CD8-positive, alpha-beta memory T cell (primary cell): ENCODE measurements at regions of chr7 and their contacts with region 1.

Region 1: GRCh38 chr7:77759294-77759889 is 38.8 kb downstream of the TMEM60 start:
- DNase-seq: peak; percentile 47 to 70 (median 55)
- H3K4me3 ChIP-seq: no peak overlapping the region
- H3K4me3 Mint-ChIP-seq: peak overlapping the region in 1 of 7 donors; percentile 23
- H3K27ac ChIP-seq: no peak overlapping the region
- H3K27ac Mint-ChIP-seq: peak overlapping the region in 5 of 8 donors; percentile 4 to 82 (median 56)
- H3K4me1 ChIP-seq: peaks cover 7% of the 10 kb centered on the region
- H3K4me1 Mint-ChIP-seq: peaks cover 39 to 69% (median 64%) of the 10 kb centered on the region in 3 donors
- H3K27me3 ChIP-seq: no peaks in the 10 kb centered on the region
- H3K27me3 Mint-ChIP-seq: no peaks in the 10 kb centered on the region

Region 2: GRCh38 chr7:77651573-77652162 is 107.7 kb before region 1 on chr7:
- CTCF ChIA-PET with region 1: interaction called, 32 read pairs
- POLR2A ChIA-PET with region 1: no interaction called
- DNase-seq: peak in 3 of 5 donors; percentile 26 to 50 (median 30)
- H3K4me3 ChIP-seq: no peak overlapping the region
- H3K4me3 Mint-ChIP-seq: no peak overlapping the region
- H3K27ac ChIP-seq: no peak overlapping the region
- H3K27ac Mint-ChIP-seq: no peak overlapping the region
- H3K4me1 ChIP-seq: no peaks in the 10 kb centered on the region
- H3K4me1 Mint-ChIP-seq: peaks cover 0 to 3% (median 0%) of the 10 kb centered on the region in 3 donors
- H3K27me3 ChIP-seq: no peaks in the 10 kb centered on the region
- H3K27me3 Mint-ChIP-seq: no peaks in the 10 kb centered on the region

Region 3: DNA sequence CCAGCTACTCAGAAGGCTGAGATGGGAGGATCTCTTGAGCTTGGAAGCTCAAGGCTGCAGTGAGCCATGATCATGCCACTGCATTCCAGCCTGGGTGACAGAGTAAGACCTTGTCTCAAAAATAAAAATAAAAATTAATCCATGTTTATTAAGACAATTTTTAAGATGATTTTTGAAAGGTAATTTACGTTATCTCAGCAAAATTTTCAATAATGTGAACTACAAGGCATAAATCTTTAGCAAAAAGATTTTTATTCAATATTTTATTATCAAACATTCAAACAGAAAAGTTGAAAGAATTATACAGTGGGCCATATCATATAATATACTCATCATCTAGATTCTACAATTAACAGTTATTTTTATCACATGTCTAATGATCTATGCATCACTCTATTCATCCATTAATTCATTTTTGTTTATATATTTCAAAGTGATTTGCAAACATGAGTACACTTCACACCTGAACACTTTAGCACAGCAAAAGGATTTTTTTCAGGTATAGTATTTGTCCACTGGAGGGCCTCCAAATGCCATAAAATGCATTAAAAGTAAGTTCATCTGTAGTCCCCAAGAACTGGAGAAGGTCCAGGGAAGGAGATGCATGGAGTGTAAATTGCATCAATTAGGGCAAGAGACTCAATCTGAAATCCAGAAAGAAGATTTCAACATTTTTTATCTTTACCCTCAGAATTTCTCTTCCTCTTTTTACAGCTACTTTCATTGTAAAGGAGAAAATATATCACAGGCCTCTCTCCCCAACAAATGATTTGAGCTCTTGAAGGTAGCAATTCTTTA is 101.8 kb before region 1 on chr7:
- CTCF ChIA-PET with region 1: interaction called, 32 read pairs
- POLR2A ChIA-PET with region 1: no interaction called
- DNase-seq: peak in 2 of 5 donors; percentile 32 to 36
- H3K4me3 ChIP-seq: no peak overlapping the region
- H3K4me3 Mint-ChIP-seq: no peak overlapping the region
- H3K27ac ChIP-seq: no peak overlapping the region
- H3K27ac Mint-ChIP-seq: no peak overlapping the region
- H3K4me1 ChIP-seq: no peaks in the 10 kb centered on the region
- H3K4me1 Mint-ChIP-seq: no peaks in the 10 kb centered on the region
- H3K27me3 ChIP-seq: no peaks in the 10 kb centered on the region
- H3K27me3 Mint-ChIP-seq: no peaks in the 10 kb centered on the region

Region 4: GRCh38 chr7:77780496-77780895 is 21.1 kb after region 1 on chr7:
- CTCF ChIA-PET with region 1: no interaction called
- POLR2A ChIA-PET with region 1: no interaction called
- DNase-seq: no peak
- H3K4me3 ChIP-seq: no peak overlapping the region
- H3K4me3 Mint-ChIP-seq: no peak overlapping the region
- H3K27ac ChIP-seq: no peak overlapping the region
- H3K27ac Mint-ChIP-seq: peak overlapping the region in 1 of 8 donors; percentile 8
- H3K4me1 ChIP-seq: no peaks in the 10 kb centered on the region
- H3K4me1 Mint-ChIP-seq: peaks cover 9 to 26% (median 11%) of the 10 kb centered on the region in 3 donors
- H3K27me3 ChIP-seq: no peaks in the 10 kb centered on the region
- H3K27me3 Mint-ChIP-seq: no peaks in the 10 kb centered on the region

Region 5: DNA sequence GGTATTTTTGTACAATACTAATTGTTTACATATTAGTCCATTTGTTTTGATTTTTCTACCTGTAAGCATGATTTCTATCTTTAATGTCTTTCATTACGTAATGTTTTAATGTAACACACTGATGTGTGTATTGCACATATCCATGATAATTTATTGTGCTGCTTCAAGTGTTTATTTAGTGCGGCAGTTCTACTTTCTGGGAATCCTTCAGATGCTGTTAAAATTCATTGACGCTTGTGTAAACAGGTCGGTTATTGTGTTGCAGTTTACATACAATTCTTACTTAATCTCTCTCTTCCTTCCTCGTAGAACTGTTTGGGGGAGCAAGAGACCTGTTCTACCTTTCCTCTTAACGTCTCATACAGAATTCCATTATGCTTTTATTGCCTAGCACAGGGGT is 31.9 kb after region 1 on chr7:
- CTCF ChIA-PET with region 1: no interaction called
- POLR2A ChIA-PET with region 1: no interaction called
- DNase-seq: no peak
- H3K4me3 ChIP-seq: no peak overlapping the region
- H3K4me3 Mint-ChIP-seq: no peak overlapping the region
- H3K27ac ChIP-seq: no peak overlapping the region
- H3K27ac Mint-ChIP-seq: peak overlapping the region in 1 of 8 donors; percentile 46
- H3K4me1 ChIP-seq: peaks cover 3% of the 10 kb centered on the region
- H3K4me1 Mint-ChIP-seq: peaks cover 19 to 30% (median 29%) of the 10 kb centered on the region in 3 donors
- H3K27me3 ChIP-seq: no peaks in the 10 kb centered on the region
- H3K27me3 Mint-ChIP-seq: no peaks in the 10 kb centered on the region